ENCODE measurements at regions of chr19 and their contacts with region 1.

Region 1: DNA sequence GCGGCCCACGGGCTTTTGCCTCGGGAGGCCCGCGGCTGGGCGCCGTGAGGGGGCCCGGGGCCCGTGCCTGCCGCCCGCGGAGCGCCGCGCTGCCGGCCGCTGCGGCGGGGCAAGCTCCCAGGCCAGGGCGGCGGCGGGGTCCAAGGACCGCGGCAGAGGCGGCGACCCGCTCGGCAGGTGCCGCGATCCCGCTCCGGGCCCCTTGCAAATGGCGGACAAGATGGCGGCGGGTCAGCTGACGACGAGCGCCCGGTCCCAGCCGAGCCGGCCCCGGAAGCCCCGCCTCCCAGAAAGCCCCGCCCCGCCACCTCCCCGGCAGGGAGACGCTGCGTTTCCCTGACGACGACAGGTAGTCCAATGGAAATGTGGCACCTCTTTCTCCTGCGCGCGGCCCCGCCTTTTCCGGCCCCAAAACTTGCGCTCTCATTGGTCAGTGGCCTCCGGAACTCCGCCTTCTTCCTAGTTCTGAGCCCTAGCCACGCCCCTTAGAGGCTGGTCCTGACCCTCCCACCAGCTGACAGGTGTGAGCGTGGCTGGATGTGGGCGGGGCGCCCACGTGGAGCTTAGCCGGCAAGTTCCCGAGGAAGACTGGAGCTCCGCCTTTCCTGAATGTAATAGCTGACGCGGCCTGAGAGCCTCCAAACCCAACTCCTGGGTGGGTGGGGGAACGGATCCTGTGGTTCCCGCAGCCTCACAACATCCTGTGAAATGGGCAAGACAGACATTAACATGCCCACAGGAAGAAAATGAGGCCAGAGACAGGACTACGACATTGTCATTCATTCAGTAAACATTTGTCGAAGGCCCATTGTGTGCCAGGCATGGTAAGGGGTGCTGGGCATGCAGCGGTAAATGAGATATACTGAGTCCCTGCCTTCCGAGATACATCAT is at the start of gene AP3D1:
- DNase-seq: peak; percentile 99
- H3K4me3 ChIP-seq: peak within 1 kb of the TSS; percentile 83
- H3K4me3 Mint-ChIP-seq: peak within 1 kb of the TSS; percentile 78
- H3K27ac Mint-ChIP-seq: peak within 1 kb of the TSS; percentile 79
- H3K4me1 ChIP-seq: peaks cover 24% of the 10 kb centered on the region
- H3K4me1 Mint-ChIP-seq: peaks cover 7% of the 10 kb centered on the region
- H3K27me3 ChIP-seq: no peaks in the 10 kb centered on the region
- H3K27me3 Mint-ChIP-seq: no peaks in the 10 kb centered on the region
- CTCF ChIP-seq: no peak
- total RNA-seq, gene AP3D1: 150 and 151 TPM in 2 replicates

Region 2: DNA sequence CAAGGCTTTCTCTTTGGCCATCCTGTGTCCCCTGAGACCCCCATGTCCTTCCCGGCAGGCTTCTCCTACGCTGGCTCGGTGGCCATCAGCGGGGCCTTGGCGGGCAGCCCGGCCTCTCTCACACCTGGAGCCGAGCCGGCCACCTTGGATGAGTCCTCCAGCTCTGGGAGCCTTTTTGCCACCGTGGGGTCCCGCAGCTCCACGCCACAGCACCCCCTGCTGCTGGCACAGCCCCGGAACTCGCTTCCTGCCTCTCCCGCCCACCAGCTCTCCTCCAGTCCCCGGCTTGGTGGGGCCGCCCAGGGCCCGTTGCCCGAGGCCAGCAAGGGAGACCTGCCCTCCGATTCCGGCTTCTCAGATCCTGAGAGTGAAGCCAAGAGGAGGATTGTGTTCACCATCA is 70.3 kb after region 1 on chr19:
- CTCF ChIA-PET with region 1: interaction called, 11 read pairs
- POLR2A ChIA-PET with region 1: interaction called, 4 read pairs
- intact Hi-C with region 1: no loop called
- DNase-seq: no peak
- H3K4me3 ChIP-seq: no peak overlapping the region
- H3K4me3 Mint-ChIP-seq: no peak overlapping the region
- H3K27ac Mint-ChIP-seq: no peak overlapping the region
- H3K4me1 ChIP-seq: no peaks in the 10 kb centered on the region
- H3K4me1 Mint-ChIP-seq: no peaks in the 10 kb centered on the region
- H3K27me3 ChIP-seq: no peaks in the 10 kb centered on the region
- H3K27me3 Mint-ChIP-seq: no peaks in the 10 kb centered on the region
- CTCF ChIP-seq: peak in 1 of 2 experiments; percentile 2

Region 3: DNA sequence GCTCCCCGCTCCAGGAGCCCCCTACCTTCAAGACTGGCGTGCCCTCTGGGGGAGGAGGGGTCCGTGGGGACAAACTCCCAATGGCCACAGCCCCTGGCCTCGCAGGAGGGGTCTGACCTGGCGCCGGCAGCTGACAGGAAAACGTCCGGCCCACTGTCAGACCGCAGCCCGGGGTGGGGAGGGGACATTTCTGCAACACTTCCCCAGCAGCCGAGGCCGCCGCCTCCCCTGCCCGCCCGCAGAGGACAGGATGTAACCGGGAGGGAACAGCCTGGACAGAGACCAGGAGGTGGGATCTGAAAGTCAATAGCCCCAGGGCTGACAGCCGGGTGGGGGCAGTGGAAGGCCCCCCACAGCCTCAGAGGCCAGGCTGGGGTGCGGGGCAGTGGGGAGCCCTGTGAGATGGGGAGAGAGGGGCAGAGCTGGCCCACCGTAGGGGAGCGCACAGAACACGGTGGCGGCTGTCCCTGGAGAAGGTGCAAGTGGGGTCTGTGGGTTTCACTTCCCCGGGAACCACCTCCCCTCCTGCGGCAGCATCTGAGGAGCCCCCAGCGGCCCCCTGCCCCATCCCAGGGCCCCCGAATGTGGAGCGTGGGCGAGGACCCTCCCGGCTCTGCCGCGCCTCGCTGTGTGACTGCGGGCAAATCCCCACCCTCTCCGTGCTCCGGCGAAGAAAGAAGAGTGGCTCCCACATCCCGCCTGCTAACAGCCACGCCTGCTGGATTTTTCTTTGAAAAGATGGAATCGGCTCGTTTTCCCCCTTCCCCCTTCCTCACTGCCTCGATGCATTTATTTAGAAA is 130.7 kb after region 1 on chr19 and contains the start of gene PEAK3:
- CTCF ChIA-PET with region 1: no interaction called
- POLR2A ChIA-PET with region 1: no interaction called
- intact Hi-C with region 1: no loop called
- DNase-seq: peak in 1 of 2 experiments; percentile 30
- H3K4me3 ChIP-seq: no peak within 1 kb of the TSS
- H3K4me3 Mint-ChIP-seq: no peak within 1 kb of the TSS
- H3K27ac Mint-ChIP-seq: peak within 1 kb of the TSS; percentile 22
- H3K4me1 ChIP-seq: peaks cover 7% of the 10 kb centered on the region; the same call in 1 of the 2 replicates
- H3K4me1 Mint-ChIP-seq: no peaks in the 10 kb centered on the region
- H3K27me3 ChIP-seq: no peaks in the 10 kb centered on the region
- H3K27me3 Mint-ChIP-seq: no peaks in the 10 kb centered on the region
- CTCF ChIP-seq: no peak
- total RNA-seq, gene PEAK3: not detected in 2 replicates